Pancreas (tissue), 10 donors: ENCODE measurements at regions of chr5 and their contacts with region 1.

Region 1: DNA sequence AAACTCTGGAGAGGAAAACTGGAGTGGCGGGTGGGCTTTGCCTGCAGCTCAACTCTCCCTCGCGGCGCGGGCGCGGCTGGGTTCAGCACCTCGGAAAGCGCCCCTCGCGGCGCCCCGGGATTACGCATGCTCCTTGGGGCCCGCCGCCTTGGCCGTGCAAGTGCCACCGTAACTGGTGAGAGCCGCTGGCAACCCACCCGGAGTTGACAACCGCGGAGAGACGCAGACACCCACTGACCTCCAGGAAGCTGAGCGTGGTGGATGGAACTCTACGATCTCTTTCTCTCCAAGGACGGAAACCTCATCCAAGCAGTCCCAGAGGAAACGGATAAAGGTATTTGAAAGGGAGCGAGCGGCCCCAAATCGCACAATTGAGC is 194 bp upstream of the RXFP3 start:
- DNase-seq: peak; percentile 33 to 88 (median 60)
- ATAC-seq: peak; percentile 93 to 96 (median 96)
- H3K4me3 ChIP-seq: peak overlapping the region in 2 of 4 donors; percentile 16 to 41
- H3K27ac ChIP-seq: no peak overlapping the region
- H3K4me1 ChIP-seq: no peaks in the 10 kb centered on the region
- H3K27me3 ChIP-seq: peaks cover 0 to 23% (median 7%) of the 10 kb centered on the region in 4 donors
- CTCF ChIP-seq: peak in 2 of 4 donors; percentile 5 to 27

Region 2: DNA sequence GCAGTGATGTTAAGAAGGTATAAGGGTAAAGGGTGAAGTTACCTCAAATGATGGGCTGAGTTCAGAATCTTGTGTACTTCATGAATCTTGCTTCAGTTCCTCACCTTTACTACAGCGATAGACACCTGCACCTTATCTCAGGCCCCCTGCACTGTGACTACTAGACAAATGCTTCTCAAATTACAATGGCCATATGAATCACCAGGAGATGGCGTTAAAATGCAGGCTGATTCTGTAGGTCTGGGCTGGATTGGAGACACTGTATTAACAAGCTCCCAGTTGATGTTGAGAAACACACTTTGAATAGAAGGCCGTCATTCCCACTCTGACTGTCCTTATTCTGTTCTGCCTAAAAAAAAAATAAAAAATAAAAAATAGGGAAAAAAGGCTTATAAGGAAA is 465.4 kb before region 1 on chr5:
- intact Hi-C with region 1: loop called in 1 of 3 experiments (anchors 10 kb)
- DNase-seq: peak in 3 of 6 donors; percentile 16 to 35 (median 26)
- ATAC-seq: peak; percentile 81 to 97 (median 94)
- H3K4me3 ChIP-seq: no peak overlapping the region
- H3K27ac ChIP-seq: no peak overlapping the region
- H3K4me1 ChIP-seq: no peaks in the 10 kb centered on the region
- H3K27me3 ChIP-seq: no peaks in the 10 kb centered on the region
- CTCF ChIP-seq: peak in 3 of 4 donors; percentile 16 to 28 (median 20)